Sigmoid colon (tissue), 7 donors: ENCODE measurements at regions of chr7 and their contacts with region 1.

Region 1: DNA sequence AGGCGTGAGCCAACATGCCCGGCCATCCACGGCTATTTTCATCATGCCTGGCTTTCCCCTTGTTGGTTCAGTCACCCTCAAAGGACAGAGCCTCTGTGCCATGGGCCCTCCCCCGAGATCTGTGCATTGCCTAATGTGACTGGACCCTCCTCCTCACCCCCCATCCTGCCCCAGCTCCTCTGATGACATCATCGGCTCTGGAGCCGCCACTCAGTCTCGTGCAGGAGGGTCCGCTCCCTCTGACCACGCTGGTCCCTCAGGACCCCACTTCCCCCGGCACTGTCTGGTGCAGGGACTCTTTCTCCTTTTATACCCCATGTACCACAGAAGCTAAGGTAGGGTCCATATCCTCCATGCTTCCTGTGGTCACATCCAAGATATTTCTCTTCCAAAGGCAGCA is 33.2 kb upstream of the BAIAP2L1 start:
- DNase-seq: no peak
- H3K4me3 ChIP-seq: no peak overlapping the region
- H3K27ac ChIP-seq: no peak overlapping the region
- H3K4me1 ChIP-seq: no peaks in the 10 kb centered on the region
- H3K27me3 ChIP-seq: no peaks in the 10 kb centered on the region
- CTCF ChIP-seq: no peak
- EP300 ChIP-seq: no peak
- POLR2A ChIP-seq: no peak

Region 2: GRCh38 chr7:98841179-98841997 is 407.3 kb after region 1 on chr7:
- intact Hi-C with region 1: loop called (anchors 1 kb)
- DNase-seq: peak; percentile 74
- H3K4me3 ChIP-seq: no peak overlapping the region
- H3K27ac ChIP-seq: no peak overlapping the region
- H3K4me1 ChIP-seq: no peaks in the 10 kb centered on the region
- H3K27me3 ChIP-seq: peaks cover 0 to 15% (median 0%) of the 10 kb centered on the region in 3 donors
- CTCF ChIP-seq: peak; percentile 73 to 99 (median 96)
- EP300 ChIP-seq: no peak
- POLR2A ChIP-seq: no peak